Heart right ventricle (tissue), 16 donors: ENCODE measurements at regions of chr5 and their contacts with region 1.

Region 1: DNA sequence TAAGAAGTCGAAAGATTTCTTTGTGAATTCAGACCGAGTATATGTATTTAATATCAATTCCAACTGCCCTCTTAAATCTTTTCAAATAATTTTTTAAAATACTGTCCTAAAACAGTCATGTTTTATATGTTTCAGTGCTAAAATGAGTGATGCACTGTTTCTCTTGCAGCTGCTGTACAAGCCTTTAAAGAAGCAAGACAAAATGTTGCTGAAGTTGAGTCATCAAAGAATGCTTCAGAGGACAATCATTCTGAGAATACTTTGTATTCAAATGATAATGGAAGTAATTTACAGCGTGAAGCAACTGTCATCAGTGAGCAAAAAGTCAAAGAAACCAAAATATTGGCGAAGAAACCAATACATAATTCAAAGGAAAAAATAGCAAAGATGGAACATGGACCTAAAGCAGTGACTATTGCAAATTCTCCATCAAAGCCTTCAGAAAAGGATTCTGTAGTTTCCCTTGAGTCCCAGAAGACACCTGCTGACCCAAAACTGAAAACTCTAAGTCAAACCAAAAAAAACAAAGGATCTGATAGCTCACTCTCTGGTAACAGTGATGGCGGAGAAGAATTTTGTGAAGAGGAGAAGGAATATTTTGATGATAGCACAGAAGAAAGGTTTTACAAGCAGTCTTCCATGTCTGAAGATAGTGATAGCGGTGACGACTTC is 58.0 kb downstream of the LOX start:
- DNase-seq: no peak
- ATAC-seq: no peak
- H3K4me3 ChIP-seq: no peak overlapping the region
- H3K27ac ChIP-seq: no peak overlapping the region
- H3K4me1 ChIP-seq: no peaks in the 10 kb centered on the region
- H3K27me3 ChIP-seq: no peaks in the 10 kb centered on the region
- CTCF ChIP-seq: no peak

Region 2: GRCh38 chr5:121485281-121485680 is 534.8 kb before region 1 on chr5:
- intact Hi-C with region 1: no loop called
- DNase-seq: no peak
- ATAC-seq: no peak
- H3K4me3 ChIP-seq: no peak overlapping the region
- H3K27ac ChIP-seq: no peak overlapping the region
- H3K4me1 ChIP-seq: no peaks in the 10 kb centered on the region
- H3K27me3 ChIP-seq: no peaks in the 10 kb centered on the region
- CTCF ChIP-seq: no peak

Region 3: DNA sequence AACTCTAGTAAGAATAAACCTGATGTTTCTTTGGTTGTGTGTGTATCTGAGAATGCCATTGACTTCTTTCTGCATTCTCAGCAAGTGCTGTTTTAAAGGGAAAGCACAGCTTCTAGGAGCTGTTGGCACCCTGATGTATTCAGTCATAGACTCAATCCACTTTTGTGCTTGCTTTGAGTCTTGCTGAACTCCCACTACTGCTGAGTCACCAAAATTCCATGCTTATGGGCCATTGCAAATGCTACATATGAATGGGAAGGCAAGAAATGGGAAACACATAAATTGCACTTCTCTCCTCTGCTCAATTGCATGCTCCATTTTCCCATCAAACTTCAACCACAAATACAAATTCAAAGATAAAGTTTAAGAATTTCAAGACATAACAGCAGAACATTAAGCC is 178.2 kb before region 1 on chr5:
- intact Hi-C with region 1: no loop called
- DNase-seq: no peak
- ATAC-seq: no peak
- H3K4me3 ChIP-seq: no peak overlapping the region
- H3K27ac ChIP-seq: no peak overlapping the region
- H3K4me1 ChIP-seq: no peaks in the 10 kb centered on the region
- H3K27me3 ChIP-seq: no peaks in the 10 kb centered on the region
- CTCF ChIP-seq: no peak

Region 4: GRCh38 chr5:122053181-122054109 is 33.4 kb after region 1 on chr5:
- intact Hi-C with region 1: no loop called
- DNase-seq: peak in 1 of 2 donors; percentile 4
- ATAC-seq: peak in 2 of 8 donors; percentile 22 to 62
- H3K4me3 ChIP-seq: no peak overlapping the region
- H3K27ac ChIP-seq: no peak overlapping the region
- H3K4me1 ChIP-seq: peaks cover 0 to 8% (median 0%) of the 10 kb centered on the region in 9 donors
- H3K27me3 ChIP-seq: no peaks in the 10 kb centered on the region
- CTCF ChIP-seq: no peak

Region 5: DNA sequence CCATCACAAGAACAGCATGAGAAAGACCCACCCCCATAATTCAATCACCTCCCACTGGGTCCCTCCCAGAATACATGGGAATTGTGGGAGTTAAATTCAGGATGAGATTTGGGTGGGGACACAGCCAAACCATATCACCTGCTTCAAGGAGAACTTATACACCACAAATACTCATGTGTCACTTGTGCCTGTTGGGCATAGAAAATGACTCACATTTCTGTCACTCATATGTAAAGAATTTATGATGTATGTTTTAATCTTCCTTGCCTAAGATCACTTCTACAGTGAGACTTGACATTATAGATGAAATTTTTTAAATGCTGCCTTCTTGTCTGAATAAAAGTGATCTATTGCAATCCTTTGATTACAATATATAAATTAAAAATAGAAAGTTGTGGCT is 1046.0 kb after region 1 on chr5:
- intact Hi-C with region 1: loop called in 1 of 10 experiments (anchors 5 kb)
- DNase-seq: no peak
- ATAC-seq: no peak
- H3K4me3 ChIP-seq: no peak overlapping the region
- H3K27ac ChIP-seq: no peak overlapping the region
- H3K4me1 ChIP-seq: no peaks in the 10 kb centered on the region
- H3K27me3 ChIP-seq: peaks cover 0 to 5% (median 0%) of the 10 kb centered on the region in 7 donors
- CTCF ChIP-seq: no peak